ENCODE measurements at regions of chr1 and their contacts with region 1.

Region 1: GRCh38 chr1:222455188-222455879 is 92.6 kb downstream of the HHIPL2 start:
- DNase-seq: peak; percentile 74 to 88 (median 85)
- H3K4me3 ChIP-seq: no peak overlapping the region
- H3K27ac ChIP-seq: no peak overlapping the region
- H3K4me1 ChIP-seq: no peaks in the 10 kb centered on the region
- H3K27me3 ChIP-seq: no peaks in the 10 kb centered on the region
- CTCF ChIP-seq: peak; percentile 74 to 78 (median 76)
- EP300 ChIP-seq: no peak
- POLR2A ChIP-seq: no peak

Region 2: DNA sequence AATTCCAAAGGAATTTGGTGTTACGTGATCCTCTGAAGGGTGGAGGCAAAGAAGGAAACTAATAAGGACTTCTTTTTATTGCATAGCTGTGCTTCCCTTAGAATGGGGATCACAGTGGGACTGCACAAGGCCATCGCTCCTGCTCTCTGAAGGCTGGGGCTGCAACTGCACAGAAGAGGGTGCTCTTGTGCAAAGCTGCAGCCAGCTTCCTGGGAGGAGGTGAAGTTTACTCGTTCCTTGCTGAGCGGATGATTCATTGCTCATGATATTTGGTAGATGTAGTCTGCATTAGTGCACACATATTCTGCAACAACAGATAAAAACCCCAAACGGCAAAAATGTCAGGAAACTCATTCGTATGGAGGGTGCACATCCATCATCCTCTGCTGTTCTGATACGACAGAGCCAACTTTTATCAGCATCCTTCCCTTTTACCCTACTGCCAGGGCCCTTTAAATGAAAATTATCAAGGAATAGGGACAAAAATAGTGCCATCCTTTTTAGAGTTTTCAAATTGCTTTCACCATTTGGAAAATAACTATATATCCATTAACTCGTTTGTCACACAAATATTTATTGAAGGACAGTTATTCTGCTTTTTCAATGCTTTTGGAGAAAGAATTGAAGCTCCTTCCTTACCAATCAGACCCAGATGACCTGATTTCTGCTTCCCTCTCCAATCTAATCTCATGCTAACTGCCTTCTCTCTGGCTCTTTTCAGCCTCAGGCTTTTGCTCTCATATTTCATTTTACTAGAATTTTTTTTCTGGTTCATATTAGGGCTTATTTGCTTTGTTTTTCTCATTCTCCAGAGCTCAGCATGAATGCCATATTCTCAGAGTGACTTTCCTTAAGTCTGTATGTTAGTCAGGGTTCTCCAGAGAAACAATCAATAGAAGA is 977.0 kb before region 1 on chr1:
- intact Hi-C with region 1: loop called in 2 of 4 experiments (anchors 10 kb)
- DNase-seq: peak; percentile 21 to 53 (median 42)
- H3K4me3 ChIP-seq: no peak overlapping the region
- H3K27ac ChIP-seq: no peak overlapping the region
- H3K4me1 ChIP-seq: no peaks in the 10 kb centered on the region
- H3K27me3 ChIP-seq: no peaks in the 10 kb centered on the region
- CTCF ChIP-seq: peak in 1 of 3 donors; percentile 24
- EP300 ChIP-seq: no peak
- POLR2A ChIP-seq: no peak

Region 3: GRCh38 chr1:221487781-221488524 is 967.4 kb before region 1 on chr1:
- intact Hi-C with region 1: loop called in 1 of 4 experiments (anchors 10 kb)
- DNase-seq: no peak
- H3K4me3 ChIP-seq: no peak overlapping the region
- H3K27ac ChIP-seq: no peak overlapping the region
- H3K4me1 ChIP-seq: no peaks in the 10 kb centered on the region
- H3K27me3 ChIP-seq: no peaks in the 10 kb centered on the region
- CTCF ChIP-seq: no peak
- EP300 ChIP-seq: no peak
- POLR2A ChIP-seq: no peak

Region 4: DNA sequence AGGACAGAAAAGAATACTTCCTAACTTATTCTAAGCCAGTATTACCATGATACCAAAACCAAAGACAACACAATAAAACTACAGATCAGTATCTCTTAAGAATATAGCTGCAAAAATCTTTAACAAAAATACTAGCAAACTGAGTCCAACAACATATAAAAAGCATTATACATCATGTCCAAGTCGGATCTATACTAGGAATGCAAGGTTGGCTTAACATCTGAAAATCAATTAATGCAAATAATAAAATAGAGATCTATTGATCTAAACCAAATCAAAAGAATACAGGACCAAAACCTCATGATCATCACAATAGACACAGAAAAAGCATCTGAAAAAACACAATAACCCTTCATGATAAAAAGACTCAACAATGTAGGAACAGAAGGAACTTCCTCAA is 115.5 kb after region 1 on chr1:
- intact Hi-C with region 1: no loop called
- DNase-seq: no peak
- H3K4me3 ChIP-seq: no peak overlapping the region
- H3K27ac ChIP-seq: no peak overlapping the region
- H3K4me1 ChIP-seq: no peaks in the 10 kb centered on the region
- H3K27me3 ChIP-seq: no peaks in the 10 kb centered on the region
- CTCF ChIP-seq: no peak
- EP300 ChIP-seq: no peak
- POLR2A ChIP-seq: no peak